ENCODE measurements at regions of chr7 and their contacts with region 1.

Region 1: GRCh38 chr7:108452722-108453121 is 3.5 kb downstream of the NRCAM start:
- DNase-seq: peak in 6 of 10 donors; percentile 30 to 62 (median 42)
- ATAC-seq: peak; percentile 27 to 28
- H3K4me3 Mint-ChIP-seq: peak overlapping the region in 8 of 10 donors; percentile 15 to 76 (median 50)
- H3K27ac Mint-ChIP-seq: peak overlapping the region in 4 of 10 donors; percentile 63 to 68 (median 65)
- H3K4me1 Mint-ChIP-seq: peaks cover 27 to 53% (median 39%) of the 10 kb centered on the region in 4 donors
- H3K27me3 Mint-ChIP-seq: peaks cover 0 to 37% (median 0%) of the 10 kb centered on the region in 5 donors

Region 2: GRCh38 chr7:108468246-108468645 is 15.5 kb after region 1 on chr7:
- POLR2A ChIA-PET with region 1: interaction called, 36 read pairs
- DNase-seq: no peak
- ATAC-seq: no peak
- H3K4me3 Mint-ChIP-seq: no peak overlapping the region
- H3K27ac Mint-ChIP-seq: peak overlapping the region in 4 of 10 donors; percentile 15 to 61 (median 36)
- H3K4me1 Mint-ChIP-seq: peaks cover 15 to 50% (median 39%) of the 10 kb centered on the region in 4 donors
- H3K27me3 Mint-ChIP-seq: no peaks in the 10 kb centered on the region

Region 3: GRCh38 chr7:108497082-108497725 is 44.5 kb after region 1 on chr7:
- POLR2A ChIA-PET with region 1: interaction called, 24 read pairs
- DNase-seq: peak; percentile 14 to 73 (median 58)
- ATAC-seq: peak; percentile 81
- H3K4me3 Mint-ChIP-seq: no peak overlapping the region
- H3K27ac Mint-ChIP-seq: no peak overlapping the region
- H3K4me1 Mint-ChIP-seq: peaks cover 0 to 17% (median 6%) of the 10 kb centered on the region in 4 donors
- H3K27me3 Mint-ChIP-seq: no peaks in the 10 kb centered on the region

Measured in naive thymus-derived CD8-positive, alpha-beta T cell (primary cell).